Sigmoid colon (tissue), 7 donors: ENCODE measurements at regions of chr11 and their contacts with region 1.

Region 1: DNA sequence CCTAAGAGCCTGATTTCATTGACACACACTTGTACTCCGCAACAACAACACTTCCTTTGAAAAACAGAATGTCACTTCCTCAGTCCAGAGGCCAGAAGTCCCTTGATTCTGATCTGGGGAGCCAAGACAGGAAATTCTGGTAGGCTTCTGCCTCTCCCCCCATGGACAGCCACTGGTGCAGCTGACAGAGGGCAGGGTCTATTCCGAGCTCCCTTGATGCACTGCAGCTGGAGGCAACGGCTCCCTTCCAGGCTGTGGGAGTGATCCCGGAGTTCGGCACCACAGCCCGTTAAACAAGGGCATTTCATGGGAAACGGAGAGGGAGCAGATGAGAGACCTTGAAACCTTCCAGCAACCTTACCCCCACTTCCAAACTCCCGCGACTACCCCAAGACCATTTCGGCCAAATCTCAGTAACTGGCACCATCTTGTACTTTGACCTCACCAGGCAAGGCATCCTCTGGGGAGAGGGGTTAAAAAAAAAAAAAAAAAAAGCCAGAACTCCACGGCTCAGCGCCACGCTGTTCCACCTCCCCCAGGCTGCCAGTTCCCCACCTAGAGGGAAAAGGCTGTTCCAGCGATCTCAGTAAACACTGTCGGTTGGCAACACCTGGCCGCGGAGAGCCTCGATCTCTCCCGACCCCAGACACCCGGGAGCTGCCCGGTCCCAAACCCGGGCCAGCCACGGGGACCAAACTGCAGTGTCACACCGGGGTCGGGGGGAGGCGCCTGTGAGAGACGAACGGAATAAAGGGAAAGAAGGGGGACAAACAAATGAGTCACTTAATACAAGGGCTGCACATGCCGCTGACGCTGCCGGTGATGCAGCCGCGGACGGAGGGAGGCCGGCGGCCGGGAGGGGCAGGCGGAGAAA is 1.1 kb downstream of the GAB2 start:
- DNase-seq: peak; percentile 95
- H3K4me3 ChIP-seq: peak overlapping the region; percentile 63 to 90 (median 84)
- H3K27ac ChIP-seq: peak overlapping the region; percentile 94 to 97 (median 95)
- H3K4me1 ChIP-seq: peaks cover 0 to 48% (median 27%) of the 10 kb centered on the region in 4 donors
- H3K27me3 ChIP-seq: peaks cover 0 to 15% (median 0%) of the 10 kb centered on the region in 3 donors
- CTCF ChIP-seq: peak in 2 of 4 experiments; percentile 14 to 38
- EP300 ChIP-seq: peak in 1 of 4 donors; percentile 3
- POLR2A ChIP-seq: peak; percentile 40 to 57

Region 2: DNA sequence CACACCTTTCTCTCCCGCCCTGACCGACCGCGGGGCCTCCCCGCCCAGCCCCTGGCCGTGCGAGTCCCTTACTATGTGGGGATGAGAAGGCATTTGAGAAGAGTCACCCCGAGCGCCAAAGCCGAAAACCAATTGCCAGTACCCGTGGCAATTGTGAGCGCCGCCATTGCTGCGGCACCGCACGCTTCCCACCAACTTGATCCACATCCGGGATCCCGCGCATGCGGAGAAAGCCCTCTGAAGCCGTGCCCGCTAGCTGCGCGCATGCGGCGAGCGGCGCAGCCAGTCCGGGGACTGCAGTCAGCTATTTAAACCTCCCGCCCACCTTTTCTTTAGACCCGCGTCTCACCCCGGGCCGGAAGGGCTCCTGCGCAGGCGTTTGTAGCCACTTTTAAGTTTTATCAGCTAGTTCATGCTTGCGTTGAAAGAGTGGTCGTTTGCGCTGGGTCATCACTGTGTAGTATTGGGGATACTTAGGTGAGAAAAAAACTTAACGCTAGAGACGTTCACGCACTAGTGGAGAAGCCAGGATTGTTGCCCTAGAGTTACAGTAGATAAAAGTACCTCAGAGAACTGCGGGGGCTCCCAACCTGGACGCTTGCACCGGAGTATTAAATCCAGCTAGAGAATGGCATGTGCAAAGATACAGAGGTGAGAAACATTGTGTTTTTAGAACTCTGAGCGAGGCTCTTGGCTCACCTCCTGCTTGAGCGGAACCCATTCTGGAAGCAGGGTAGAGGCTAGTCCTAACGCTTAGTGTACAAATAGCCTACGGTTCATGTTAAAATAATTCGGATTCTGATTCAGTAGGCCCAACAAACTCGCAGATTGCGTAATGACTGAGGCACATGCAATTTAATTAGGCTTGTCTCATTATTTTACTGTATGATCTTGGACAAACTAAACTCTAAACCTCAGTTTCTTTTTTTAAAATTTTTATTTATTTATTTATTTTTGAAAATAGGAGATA is 276.8 kb before region 1 on chr11 and contains the start of gene ALG8:
- intact Hi-C with region 1: loop called (anchors 2 kb)
- DNase-seq: peak; percentile 97
- H3K4me3 ChIP-seq: peak within 1 kb of the TSS; percentile 65 to 70 (median 69)
- H3K27ac ChIP-seq: peak within 1 kb of the TSS; percentile 68 to 82 (median 76)
- H3K4me1 ChIP-seq: peaks cover 0 to 18% (median 16%) of the 10 kb centered on the region in 4 donors
- H3K27me3 ChIP-seq: no peaks in the 10 kb centered on the region
- CTCF ChIP-seq: no peak
- EP300 ChIP-seq: no peak
- POLR2A ChIP-seq: peak in 1 of 2 donors; percentile 8
- total RNA-seq, gene ALG8: 15.6 to 26.4 (median 24.2) TPM

Region 3: DNA sequence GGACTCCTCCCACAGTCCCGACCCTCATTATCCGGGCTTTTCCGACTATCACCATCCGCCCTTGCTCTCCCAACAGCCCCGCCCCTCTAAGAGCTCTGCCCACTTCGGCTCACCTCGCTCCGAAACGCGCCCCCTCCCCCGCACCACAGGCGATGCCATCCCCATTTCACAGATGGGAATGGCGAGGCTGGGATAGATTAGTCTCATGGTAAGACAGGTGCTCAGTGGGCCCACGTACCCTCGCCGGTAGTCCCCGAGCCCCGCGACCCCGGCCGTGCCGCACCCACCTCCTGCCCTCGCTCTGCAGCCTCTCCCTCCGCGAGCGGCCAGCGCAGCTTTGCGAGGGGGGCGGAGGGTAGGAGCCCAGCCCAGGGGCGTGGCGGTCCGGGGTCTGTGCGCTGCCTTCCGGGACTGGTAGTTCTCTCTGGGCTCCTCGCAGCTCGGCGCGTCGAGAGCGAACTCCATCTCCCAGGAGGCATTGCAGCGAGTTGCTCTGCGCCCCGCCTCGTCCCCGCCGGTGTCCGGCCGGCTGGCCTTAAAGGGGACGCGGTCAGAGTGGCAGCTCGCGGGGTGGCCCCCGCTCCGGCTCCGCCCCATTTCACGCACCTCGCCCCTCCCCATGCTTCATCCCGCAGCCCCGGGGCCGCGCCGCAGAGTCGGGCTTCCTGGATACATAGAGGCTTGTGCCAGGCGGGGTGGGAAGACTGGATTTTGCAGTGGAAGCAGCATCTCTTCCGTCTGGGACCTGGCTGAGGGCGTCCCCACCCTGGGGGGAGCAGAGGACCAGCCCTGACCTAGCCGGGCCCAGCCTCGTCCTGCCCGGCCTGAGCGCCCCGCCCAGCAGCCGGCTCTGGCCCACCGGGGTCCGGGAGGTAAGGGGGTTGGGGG is 228.0 kb before region 1 on chr11 and contains the starts of genes KCTD21 and USP35:
- intact Hi-C with region 1: loop called (anchors 5 kb)
- DNase-seq: peak; percentile 98
- H3K4me3 ChIP-seq: peak within 1 kb of the TSS; percentile 70 to 97 (median 90)
- H3K27ac ChIP-seq: peak within 1 kb of the TSS; percentile 79 to 91 (median 88)
- H3K4me1 ChIP-seq: peaks cover 0 to 51% (median 39%) of the 10 kb centered on the region in 4 donors
- H3K27me3 ChIP-seq: no peaks in the 10 kb centered on the region
- CTCF ChIP-seq: no peak
- EP300 ChIP-seq: no peak
- POLR2A ChIP-seq: peak; percentile 38 to 70
- total RNA-seq, gene KCTD21: 5.4 to 18.8 (median 9.2) TPM
- total RNA-seq, gene USP35: 6.7 to 23.3 (median 10.6) TPM

Region 4: DNA sequence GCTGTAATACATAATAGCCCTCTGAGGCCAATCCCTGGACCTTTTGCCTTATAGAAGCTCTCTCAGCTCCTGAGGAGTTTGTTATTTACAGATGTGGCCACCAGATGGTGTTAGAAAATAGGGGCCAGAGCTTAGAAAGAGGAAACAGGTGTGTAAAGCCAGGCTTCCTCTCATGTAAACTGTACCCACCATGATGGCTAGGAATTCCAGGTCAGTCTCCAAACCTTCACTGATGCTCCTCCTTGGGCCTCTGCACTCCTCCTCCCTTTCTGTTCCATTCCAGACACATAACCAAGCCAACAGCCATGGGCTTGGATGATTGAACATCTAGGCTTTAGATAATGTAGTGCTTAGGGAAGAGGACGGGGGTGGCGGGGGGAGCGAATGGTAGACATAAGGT is 188.1 kb before region 1 on chr11:
- intact Hi-C with region 1: loop called (anchors 5 kb)
- DNase-seq: no peak
- H3K4me3 ChIP-seq: no peak overlapping the region
- H3K27ac ChIP-seq: no peak overlapping the region
- H3K4me1 ChIP-seq: peaks cover 0 to 12% (median 3%) of the 10 kb centered on the region in 4 donors
- H3K27me3 ChIP-seq: no peaks in the 10 kb centered on the region
- CTCF ChIP-seq: peak in 3 of 4 experiments; percentile 30 to 45 (median 43)
- EP300 ChIP-seq: no peak
- POLR2A ChIP-seq: no peak

Region 5: DNA sequence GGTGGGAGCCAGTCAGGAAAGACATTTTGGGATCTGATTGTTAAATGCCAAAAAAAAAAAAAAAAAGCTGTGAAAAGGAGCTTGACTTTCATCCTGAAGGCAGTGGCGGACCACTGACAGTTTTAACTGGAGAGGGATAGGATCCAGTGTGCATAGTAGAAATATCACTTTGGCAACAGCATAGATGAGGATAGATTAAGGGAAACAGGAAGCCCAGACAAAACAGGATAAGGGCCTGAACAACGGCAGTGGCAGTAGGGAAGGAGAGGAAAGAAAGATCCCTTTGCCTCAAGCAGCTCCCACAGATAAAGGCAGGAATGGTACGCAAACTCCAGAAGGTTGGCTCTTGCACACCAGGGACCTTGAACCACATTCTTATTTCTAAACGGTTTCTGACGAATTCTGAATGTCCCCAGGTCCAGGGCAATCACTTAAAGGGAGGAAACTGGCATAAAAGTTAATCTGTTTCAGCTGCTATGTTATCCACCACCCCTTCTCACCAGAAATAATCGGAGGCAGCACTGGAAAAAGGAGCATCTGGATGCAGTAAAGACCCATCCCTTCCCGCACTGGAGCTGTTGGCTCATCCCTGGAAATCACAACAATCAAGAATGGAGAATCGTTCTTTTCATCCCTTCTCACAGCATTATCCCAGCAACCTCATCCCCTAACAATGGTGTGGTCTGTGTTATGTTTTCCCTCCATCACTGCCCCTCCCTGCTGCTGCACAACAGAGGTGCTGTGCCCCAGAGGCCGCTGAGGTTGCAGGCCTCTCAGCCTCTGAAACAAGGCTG is 98.0 kb before region 1 on chr11:
- intact Hi-C with region 1: loop called (anchors 5 kb)
- DNase-seq: no peak
- H3K4me3 ChIP-seq: no peak overlapping the region
- H3K27ac ChIP-seq: peak overlapping the region in 3 of 4 donors; percentile 31 to 58 (median 45)
- H3K4me1 ChIP-seq: peaks cover 0 to 38% (median 28%) of the 10 kb centered on the region in 4 donors
- H3K27me3 ChIP-seq: no peaks in the 10 kb centered on the region
- CTCF ChIP-seq: no peak
- EP300 ChIP-seq: no peak
- POLR2A ChIP-seq: no peak

Region 6: DNA sequence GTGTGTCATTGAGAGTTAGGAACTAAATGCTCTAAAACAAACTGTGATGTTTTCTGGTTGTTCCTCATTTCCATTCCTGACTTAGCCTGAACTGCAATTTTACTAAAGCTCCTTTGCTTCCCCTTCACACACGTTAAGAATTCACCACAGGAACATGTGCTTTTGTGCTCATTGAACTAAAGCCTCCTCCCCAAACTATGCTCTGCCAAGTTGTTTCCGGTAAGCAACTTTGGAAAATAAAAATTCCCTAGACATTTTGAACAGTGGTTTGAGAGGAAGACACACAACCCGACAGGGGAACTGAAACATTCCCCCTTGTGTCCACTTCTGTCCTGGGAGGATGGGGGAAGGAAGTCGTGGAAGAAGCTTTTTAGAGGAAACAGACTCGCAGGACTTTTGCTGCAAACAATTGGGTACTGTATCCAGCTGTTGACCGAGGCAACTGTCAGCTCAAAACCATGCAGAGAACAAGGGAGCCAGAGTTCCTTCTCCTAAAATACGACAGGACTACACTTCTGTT is 65.8 kb before region 1 on chr11:
- intact Hi-C with region 1: loop called (anchors 2 kb)
- DNase-seq: peak; percentile 63
- H3K4me3 ChIP-seq: peak overlapping the region in 3 of 4 donors; percentile 7 to 26 (median 16)
- H3K27ac ChIP-seq: peak overlapping the region; percentile 64 to 76 (median 69)
- H3K4me1 ChIP-seq: peaks cover 0 to 57% (median 38%) of the 10 kb centered on the region in 4 donors
- H3K27me3 ChIP-seq: no peaks in the 10 kb centered on the region
- CTCF ChIP-seq: no peak
- EP300 ChIP-seq: no peak
- POLR2A ChIP-seq: no peak

Region 7: DNA sequence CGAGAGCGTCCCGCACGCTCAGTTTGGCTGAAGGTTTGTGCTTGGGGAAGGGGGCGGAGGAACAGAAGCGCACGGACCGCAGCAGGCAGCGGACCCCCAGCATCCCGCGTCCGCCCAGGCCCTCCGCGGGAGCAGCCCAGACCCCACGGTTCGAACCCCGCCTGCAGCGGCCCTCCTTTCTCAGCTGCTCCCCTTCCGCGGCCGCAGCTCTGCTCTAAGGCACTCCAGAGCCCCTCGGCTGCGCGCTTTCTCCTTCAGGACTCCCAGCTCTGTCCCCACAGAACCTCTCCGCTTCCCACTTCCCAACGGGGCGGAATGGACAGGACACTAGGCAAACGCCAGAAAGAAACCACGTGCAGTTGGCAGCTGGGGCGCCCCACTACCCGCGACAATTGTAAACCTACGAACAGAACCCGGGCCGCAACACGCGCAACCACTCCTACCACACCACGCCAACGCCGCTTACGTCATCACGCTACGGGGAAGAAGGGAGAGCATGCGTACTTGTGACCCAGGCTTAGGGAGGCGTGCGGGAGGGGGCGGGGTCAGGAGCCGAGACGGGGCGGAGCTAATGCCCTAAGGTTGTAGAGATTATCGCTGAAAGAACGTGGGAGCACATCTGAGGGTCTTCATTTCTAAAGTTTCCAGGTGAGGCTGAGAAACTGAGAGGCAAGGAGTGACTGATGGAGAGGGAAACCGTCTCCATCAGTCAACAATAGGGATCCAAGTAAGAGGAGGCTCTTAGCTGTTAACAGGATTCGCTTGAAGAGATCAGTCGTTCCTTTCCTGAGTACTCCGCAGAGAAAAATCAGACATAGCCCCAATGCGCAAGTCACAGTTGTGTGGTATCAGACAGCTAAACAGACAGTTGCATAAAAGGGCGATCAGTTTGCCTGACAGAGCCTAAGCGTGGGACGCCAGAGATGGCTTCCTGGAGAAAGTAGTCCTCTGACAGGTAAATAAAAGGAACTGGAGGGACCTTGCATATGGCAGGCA is 158.1 kb after region 1 on chr11 and contains the start of gene NARS2:
- intact Hi-C with region 1: loop called (anchors 5 kb)
- DNase-seq: peak; percentile 99
- H3K4me3 ChIP-seq: peak within 1 kb of the TSS; percentile 62 to 91 (median 82)
- H3K27ac ChIP-seq: peak within 1 kb of the TSS; percentile 85 to 91 (median 89)
- H3K4me1 ChIP-seq: peaks cover 0 to 20% (median 15%) of the 10 kb centered on the region in 4 donors
- H3K27me3 ChIP-seq: no peaks in the 10 kb centered on the region
- CTCF ChIP-seq: no peak
- EP300 ChIP-seq: no peak
- POLR2A ChIP-seq: peak; percentile 56 to 78
- total RNA-seq, gene NARS2: 7.8 to 15.5 (median 13.6) TPM

Region 8: DNA sequence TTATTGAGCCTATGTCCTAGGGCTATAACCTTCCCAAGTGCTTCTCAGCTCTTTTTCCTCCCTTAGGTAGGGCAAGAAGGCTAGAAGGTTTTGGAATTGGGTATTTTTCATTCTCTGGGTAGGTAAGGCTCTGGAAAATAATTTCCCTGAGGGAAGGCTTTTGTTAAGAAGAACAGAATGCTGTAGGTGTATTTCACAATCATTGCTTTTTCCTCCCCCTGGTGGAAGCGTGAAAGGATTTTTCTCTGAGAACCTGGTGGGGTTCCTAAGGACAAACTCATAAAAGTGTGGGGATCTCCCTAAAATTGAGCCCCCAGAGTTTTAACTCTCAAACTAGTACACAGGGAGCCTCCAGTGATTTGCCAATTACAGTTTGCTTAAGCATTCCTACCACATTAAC is 199.2 kb after region 1 on chr11:
- intact Hi-C with region 1: no loop called
- DNase-seq: no peak
- H3K4me3 ChIP-seq: no peak overlapping the region
- H3K27ac ChIP-seq: no peak overlapping the region
- H3K4me1 ChIP-seq: no peaks in the 10 kb centered on the region
- H3K27me3 ChIP-seq: no peaks in the 10 kb centered on the region
- CTCF ChIP-seq: no peak
- EP300 ChIP-seq: no peak
- POLR2A ChIP-seq: no peak